Activated T-helper 2 cell treated with anti-CD3 and anti-CD28 coated beads, Interferon-gamma antibody, Interleukin-2, Interleukin-4, amounts not matched to agents 10 μg/mL and 5 μg/mL and 100 μg/mL, durations not matched to agents 14 hours and 24 hours and 36 hours (primary cell): ENCODE measurements at regions of chr17 and their contacts with region 1.

Region 1: DNA sequence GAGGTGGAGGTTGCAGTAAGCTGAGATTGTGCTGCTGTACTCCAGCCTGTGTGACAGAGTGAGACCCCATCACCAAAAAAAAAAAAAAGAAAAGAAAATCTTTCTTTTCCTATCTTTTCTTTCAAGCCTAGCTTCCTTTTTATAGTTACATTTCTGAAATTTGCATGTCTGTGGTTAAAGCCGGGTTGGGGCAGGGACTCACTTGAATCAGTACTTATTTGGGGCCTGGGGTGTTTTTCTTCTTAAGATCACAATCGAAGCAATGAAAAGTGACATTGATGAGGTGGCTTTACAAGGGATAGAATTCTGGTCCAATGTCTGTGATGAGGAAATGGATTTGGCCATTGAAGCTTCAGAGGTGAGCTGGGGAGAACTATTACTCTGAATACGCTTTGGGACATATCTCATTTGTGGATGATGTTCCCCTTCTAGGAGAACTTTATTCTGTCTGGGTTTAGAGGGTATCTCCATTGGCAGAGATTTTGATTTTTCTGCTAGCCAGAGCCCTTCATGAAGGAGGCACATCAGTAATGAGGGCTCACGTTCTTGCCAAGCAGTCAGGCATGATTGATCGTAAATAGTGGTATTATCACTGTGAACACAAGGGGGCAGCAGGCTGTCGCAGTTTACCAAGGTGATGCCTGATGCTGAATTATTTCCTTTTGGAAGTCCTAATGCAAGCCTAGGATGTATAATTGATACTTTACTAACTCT is 14.3 kb downstream of the KPNB1 start:
- DNase-seq: peak; percentile 36
- H3K4me3 Mint-ChIP-seq: no peak overlapping the region
- H3K27ac Mint-ChIP-seq: peak overlapping the region; percentile 61
- H3K4me1 Mint-ChIP-seq: peaks cover 28% of the 10 kb centered on the region
- H3K27me3 Mint-ChIP-seq: no peaks in the 10 kb centered on the region

Region 2: GRCh38 chr17:47649153-47649971 is 14.7 kb before region 1 on chr17 and contains the start of gene KPNB1:
- intact Hi-C with region 1: loop called (anchors 1 kb)
- DNase-seq: peak; percentile 99
- H3K4me3 Mint-ChIP-seq: peak within 1 kb of the TSS; percentile 96
- H3K27ac Mint-ChIP-seq: peak within 1 kb of the TSS; percentile 100
- H3K4me1 Mint-ChIP-seq: peaks cover 42% of the 10 kb centered on the region
- H3K27me3 Mint-ChIP-seq: no peaks in the 10 kb centered on the region
- total RNA-seq, gene KPNB1: 687 and 692 TPM in 2 replicates

Region 3: GRCh38 chr17:47802341-47803022 is 138.4 kb after region 1 on chr17:
- intact Hi-C with region 1: loop called (anchors 10 kb)
- DNase-seq: peak; percentile 28
- H3K4me3 Mint-ChIP-seq: no peak overlapping the region
- H3K27ac Mint-ChIP-seq: no peak overlapping the region
- H3K4me1 Mint-ChIP-seq: no peaks in the 10 kb centered on the region
- H3K27me3 Mint-ChIP-seq: peaks cover 3% of the 10 kb centered on the region